ENCODE measurements at regions of chr3 and their contacts with region 1.

Region 1: DNA sequence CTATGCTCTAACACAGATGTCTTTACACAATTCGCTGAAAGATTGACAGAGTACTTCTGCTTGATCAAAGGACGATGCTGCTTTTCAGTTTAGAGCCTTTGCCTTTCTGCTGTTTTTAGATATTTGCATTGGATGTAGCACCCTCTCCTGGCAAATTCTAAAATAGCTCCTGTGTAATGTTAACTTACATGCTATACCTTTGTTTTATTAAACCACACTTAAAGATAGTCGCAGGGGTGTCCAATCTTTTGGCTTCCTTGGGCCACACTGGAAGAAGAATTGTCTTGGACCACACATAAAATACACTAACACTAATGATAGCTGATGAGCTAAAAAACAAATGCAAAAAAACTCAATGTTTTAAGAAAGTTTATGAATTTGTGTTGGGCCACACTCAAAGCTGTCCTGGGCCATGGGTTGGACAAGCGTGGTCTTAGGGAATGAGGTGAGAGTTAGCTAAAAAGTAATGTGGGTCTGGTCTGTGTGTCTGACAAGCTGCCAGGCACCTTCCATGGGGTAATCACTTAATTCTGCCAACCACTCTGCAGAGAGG is 62.9 kb downstream of the ATG7 start:
- DNase-seq: peak; percentile 44
- H3K4me3 Mint-ChIP-seq: no peak overlapping the region
- H3K27ac Mint-ChIP-seq: no peak overlapping the region
- H3K4me1 Mint-ChIP-seq: no peaks in the 10 kb centered on the region
- H3K27me3 Mint-ChIP-seq: no peaks in the 10 kb centered on the region
- CTCF ChIP-seq: no peak

Region 2: GRCh38 chr3:10263646-10264363 is 1071.3 kb before region 1 on chr3:
- CTCF ChIA-PET with region 1: no interaction called
- intact Hi-C with region 1: no loop called
- DNase-seq: peak; percentile 24
- H3K4me3 Mint-ChIP-seq: no peak overlapping the region
- H3K27ac Mint-ChIP-seq: no peak overlapping the region
- H3K4me1 Mint-ChIP-seq: no peaks in the 10 kb centered on the region
- H3K27me3 Mint-ChIP-seq: no peaks in the 10 kb centered on the region
- CTCF ChIP-seq: peak; percentile 33

Region 3: GRCh38 chr3:11155341-11156025 is 179.6 kb before region 1 on chr3:
- CTCF ChIA-PET with region 1: interaction called, 3 read pairs
- intact Hi-C with region 1: loop called (anchors 5 kb)
- DNase-seq: peak; percentile 66
- H3K4me3 Mint-ChIP-seq: peak overlapping the region; percentile 48
- H3K27ac Mint-ChIP-seq: no peak overlapping the region
- H3K4me1 Mint-ChIP-seq: peaks cover 12% of the 10 kb centered on the region
- H3K27me3 Mint-ChIP-seq: peaks cover 77% of the 10 kb centered on the region
- CTCF ChIP-seq: peak; percentile 38

Region 4: GRCh38 chr3:11226042-11226370 is 109.1 kb before region 1 on chr3:
- CTCF ChIA-PET with region 1: interaction called, 10 read pairs
- intact Hi-C with region 1: no loop called
- DNase-seq: peak; percentile 44
- H3K4me3 Mint-ChIP-seq: peak overlapping the region; percentile 97
- H3K27ac Mint-ChIP-seq: peak overlapping the region; percentile 99
- H3K4me1 Mint-ChIP-seq: peaks cover 22% of the 10 kb centered on the region
- H3K27me3 Mint-ChIP-seq: no peaks in the 10 kb centered on the region
- CTCF ChIP-seq: no peak

Region 5: DNA sequence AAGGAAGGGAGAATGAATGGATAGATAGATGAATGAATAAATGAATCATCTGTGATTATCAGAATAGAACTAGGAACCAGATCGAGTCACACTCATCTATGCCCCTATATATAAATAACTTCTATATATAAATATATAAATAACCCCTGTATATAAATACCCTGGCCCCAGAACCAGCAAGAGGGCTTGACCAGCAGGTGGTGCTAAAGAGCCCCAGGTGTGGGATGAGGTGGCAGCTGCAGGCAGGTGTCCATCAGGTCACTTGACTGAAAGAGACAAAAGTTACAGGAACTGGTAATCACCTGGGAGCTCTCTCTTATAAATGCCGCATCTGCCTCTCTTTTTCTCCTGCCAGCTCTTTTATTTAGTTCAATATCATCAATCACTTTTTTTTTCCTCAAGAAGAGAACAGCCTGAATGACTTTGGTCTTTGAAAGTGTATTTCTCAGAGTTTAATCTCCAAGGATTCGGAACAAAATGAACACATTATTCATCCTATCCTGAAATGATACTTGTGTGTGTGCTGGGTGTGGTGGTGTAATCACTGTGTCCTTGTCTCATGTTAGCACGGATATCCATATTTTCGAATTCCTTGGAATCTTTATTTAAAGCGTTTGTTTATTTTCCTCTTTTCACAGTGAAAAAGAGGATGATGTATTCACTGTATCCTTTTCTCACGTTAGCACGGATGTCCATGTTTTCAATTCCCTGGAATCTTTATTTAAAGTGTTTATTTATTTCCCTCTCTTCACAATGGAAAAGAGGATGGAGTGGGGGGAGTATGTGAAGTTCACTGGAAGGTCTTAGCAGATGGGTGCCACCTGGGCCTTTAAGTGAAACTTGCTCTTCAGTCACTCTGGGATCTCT is 98.3 kb before region 1 on chr3:
- CTCF ChIA-PET with region 1: interaction called, 11 read pairs
- intact Hi-C with region 1: loop called (anchors 1 kb)
- DNase-seq: peak; percentile 91
- H3K4me3 Mint-ChIP-seq: no peak overlapping the region
- H3K27ac Mint-ChIP-seq: no peak overlapping the region
- H3K4me1 Mint-ChIP-seq: peaks cover 10% of the 10 kb centered on the region
- H3K27me3 Mint-ChIP-seq: no peaks in the 10 kb centered on the region
- CTCF ChIP-seq: peak; percentile 40

Region 6: GRCh38 chr3:11260460-11260859 is 74.7 kb before region 1 on chr3:
- CTCF ChIA-PET with region 1: no interaction called
- intact Hi-C with region 1: no loop called
- DNase-seq: no peak
- H3K4me3 Mint-ChIP-seq: no peak overlapping the region
- H3K27ac Mint-ChIP-seq: no peak overlapping the region
- H3K4me1 Mint-ChIP-seq: no peaks in the 10 kb centered on the region
- H3K27me3 Mint-ChIP-seq: no peaks in the 10 kb centered on the region
- CTCF ChIP-seq: no peak

Region 7: GRCh38 chr3:11356269-11356668 is 21.1 kb after region 1 on chr3:
- CTCF ChIA-PET with region 1: no interaction called
- intact Hi-C with region 1: no loop called
- DNase-seq: no peak
- H3K4me3 Mint-ChIP-seq: no peak overlapping the region
- H3K27ac Mint-ChIP-seq: no peak overlapping the region
- H3K4me1 Mint-ChIP-seq: peaks cover 2% of the 10 kb centered on the region
- H3K27me3 Mint-ChIP-seq: no peaks in the 10 kb centered on the region
- CTCF ChIP-seq: no peak